ENCODE measurements at regions of chr3 and their contacts with region 1.

Region 1: DNA sequence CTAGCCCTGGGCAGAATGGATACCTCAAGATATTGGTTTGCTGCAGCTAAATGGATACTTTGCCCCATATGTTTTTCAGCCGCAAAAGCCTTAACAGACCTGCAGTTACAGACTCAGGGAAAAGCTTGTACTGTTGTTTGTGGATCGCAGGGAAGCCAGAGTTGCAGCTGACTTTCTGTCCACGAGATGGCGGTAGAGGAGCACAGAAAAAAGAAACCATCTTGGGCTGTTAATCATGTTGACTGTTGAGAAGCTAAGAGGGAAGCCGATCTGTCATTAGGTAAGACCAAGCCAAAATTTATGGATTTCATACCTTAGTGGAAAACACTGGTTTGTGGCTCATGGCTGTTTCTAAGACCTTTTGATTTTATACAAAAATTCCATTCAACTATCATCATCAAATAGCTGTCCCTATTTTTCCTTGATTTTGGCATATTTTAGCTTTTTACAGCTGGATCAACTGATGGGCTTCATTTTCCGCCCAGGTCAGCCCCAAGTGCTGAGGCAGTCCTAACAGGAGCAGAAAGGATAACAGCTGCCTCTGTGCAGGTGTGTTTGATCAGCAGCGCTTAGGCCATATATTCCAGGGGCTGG is 205.7 kb upstream of the ZPLD1 start:
- DNase-seq: peak; percentile 94
- ATAC-seq: peak; percentile 31
- H3K4me3 ChIP-seq: no peak overlapping the region
- H3K27ac ChIP-seq: no peak overlapping the region
- H3K4me1 ChIP-seq: peaks cover 39% of the 10 kb centered on the region
- H3K27me3 ChIP-seq: no peaks in the 10 kb centered on the region
- CTCF ChIP-seq: peak; percentile 96

Region 2: DNA sequence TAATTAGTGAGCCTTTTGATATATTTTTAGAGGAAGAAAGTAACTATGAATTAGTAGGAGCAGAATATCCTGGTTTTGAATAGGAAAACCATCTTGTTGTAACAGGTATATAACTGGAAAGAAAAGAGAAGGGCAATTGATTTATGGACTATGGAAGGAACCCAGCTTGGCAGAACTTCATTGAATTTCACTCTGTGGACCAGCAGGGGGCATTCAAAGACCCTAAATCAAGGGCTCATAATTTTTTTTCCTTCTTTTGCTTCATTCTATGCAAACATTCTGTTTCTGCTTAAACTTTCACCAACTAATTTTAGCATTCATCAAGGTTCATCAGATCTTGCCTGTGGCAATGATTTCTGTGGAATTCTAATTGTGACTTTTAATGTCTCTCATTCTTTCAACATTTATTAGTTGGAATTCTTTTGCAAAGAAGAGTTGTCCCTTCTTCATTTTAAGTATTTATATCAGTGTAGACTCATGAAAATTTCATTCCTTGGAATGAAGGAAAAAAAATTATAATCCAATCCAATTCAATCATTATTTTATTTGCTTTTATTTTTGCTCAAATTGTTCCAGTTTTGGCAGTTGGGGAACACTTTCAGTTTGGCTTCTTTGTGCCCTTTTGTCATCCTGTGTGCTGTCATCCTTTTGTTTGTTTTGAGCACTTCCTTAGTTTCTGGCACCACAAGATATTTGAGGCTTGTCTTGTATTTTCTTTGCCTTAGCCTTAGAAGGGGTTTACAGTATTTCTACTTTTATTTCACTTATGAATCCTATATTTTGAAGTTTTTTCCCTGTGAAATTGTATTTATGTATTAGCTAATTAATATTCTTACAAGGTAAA is 419.8 kb before region 1 on chr3:
- CTCF ChIA-PET with region 1: interaction called, 17 read pairs
- POLR2A ChIA-PET with region 1: interaction called, 5 read pairs
- intact Hi-C with region 1: loop called (anchors 1 kb)
- DNase-seq: peak; percentile 74
- ATAC-seq: peak; percentile 78
- H3K4me3 ChIP-seq: no peak overlapping the region
- H3K27ac ChIP-seq: peak overlapping the region; percentile 58
- H3K4me1 ChIP-seq: peaks cover 19% of the 10 kb centered on the region
- H3K27me3 ChIP-seq: no peaks in the 10 kb centered on the region
- CTCF ChIP-seq: peak; percentile 93

Region 3: DNA sequence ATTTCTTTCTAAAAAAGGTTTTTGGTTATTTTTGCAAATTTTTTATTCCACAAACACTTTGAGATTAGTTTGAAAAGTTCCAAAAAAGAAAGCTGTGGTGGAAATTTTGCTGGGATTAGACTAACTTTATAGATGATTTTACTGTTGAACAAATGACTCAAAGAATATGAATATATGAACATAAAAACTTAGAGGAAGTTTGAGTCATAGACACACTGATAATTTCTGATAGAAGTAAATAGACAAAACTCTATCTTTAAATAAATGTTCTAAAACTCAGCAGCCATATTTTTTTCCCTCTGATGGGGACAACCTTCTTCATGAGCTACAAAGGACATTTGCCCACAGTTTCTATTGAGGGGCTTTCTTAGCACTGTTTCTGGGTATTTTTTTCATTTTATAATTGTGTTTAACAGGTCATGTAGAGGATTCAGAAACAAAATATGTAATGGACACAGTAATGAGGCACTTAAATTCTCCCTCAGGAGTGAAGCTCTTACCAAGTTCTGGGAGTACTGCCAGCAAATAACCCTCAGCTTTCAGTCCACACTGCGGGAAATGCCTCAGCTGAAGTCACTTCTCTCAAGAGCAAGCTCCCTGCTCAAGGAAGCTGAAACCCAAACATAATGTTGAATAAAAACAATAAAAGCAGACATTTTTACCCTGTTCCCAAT is 222.2 kb before region 1 on chr3:
- CTCF ChIA-PET with region 1: interaction called, 3 read pairs
- POLR2A ChIA-PET with region 1: no interaction called
- intact Hi-C with region 1: loop called (anchors 2 kb)
- DNase-seq: peak; percentile 95
- ATAC-seq: peak; percentile 96
- H3K4me3 ChIP-seq: peak overlapping the region; percentile 20; the same call in 1 of the 2 replicates
- H3K27ac ChIP-seq: peak overlapping the region; percentile 92
- H3K4me1 ChIP-seq: peaks cover 26% of the 10 kb centered on the region
- H3K27me3 ChIP-seq: no peaks in the 10 kb centered on the region
- CTCF ChIP-seq: no peak

Region 4: GRCh38 chr3:102136183-102136582 is 93.0 kb before region 1 on chr3:
- CTCF ChIA-PET with region 1: interaction called, 5 read pairs
- POLR2A ChIA-PET with region 1: interaction called, 3 read pairs
- intact Hi-C with region 1: loop called (anchors 2 kb)
- DNase-seq: peak; percentile 84
- ATAC-seq: peak; percentile 94
- H3K4me3 ChIP-seq: peak overlapping the region; percentile 39; the same call in 1 of the 2 replicates
- H3K27ac ChIP-seq: peak overlapping the region; percentile 94
- H3K4me1 ChIP-seq: peaks cover 18% of the 10 kb centered on the region
- H3K27me3 ChIP-seq: no peaks in the 10 kb centered on the region
- CTCF ChIP-seq: no peak

Region 5: GRCh38 chr3:102195198-102195948 is 33.8 kb before region 1 on chr3:
- CTCF ChIA-PET with region 1: no interaction called
- POLR2A ChIA-PET with region 1: no interaction called
- intact Hi-C with region 1: no loop called
- DNase-seq: peak; percentile 74
- ATAC-seq: peak; percentile 32
- H3K4me3 ChIP-seq: no peak overlapping the region
- H3K27ac ChIP-seq: peak overlapping the region; percentile 79
- H3K4me1 ChIP-seq: peaks cover 51% of the 10 kb centered on the region
- H3K27me3 ChIP-seq: no peaks in the 10 kb centered on the region
- CTCF ChIP-seq: no peak

Region 6: GRCh38 chr3:102466001-102466400 is 236.8 kb after region 1 on chr3:
- CTCF ChIA-PET with region 1: interaction called, 5 read pairs
- POLR2A ChIA-PET with region 1: no interaction called
- intact Hi-C with region 1: loop called (anchors 1 kb)
- DNase-seq: peak; percentile 51
- ATAC-seq: peak; percentile 90
- H3K4me3 ChIP-seq: no peak overlapping the region
- H3K27ac ChIP-seq: no peak overlapping the region
- H3K4me1 ChIP-seq: peaks cover 6% of the 10 kb centered on the region
- H3K27me3 ChIP-seq: no peaks in the 10 kb centered on the region
- CTCF ChIP-seq: peak; percentile 66

Region 7: GRCh38 chr3:102673271-102674115 is 444.3 kb after region 1 on chr3:
- CTCF ChIA-PET with region 1: interaction called, 4 read pairs
- POLR2A ChIA-PET with region 1: no interaction called
- intact Hi-C with region 1: loop called (anchors 2 kb)
- DNase-seq: peak; percentile 71
- ATAC-seq: peak; percentile 86
- H3K4me3 ChIP-seq: 0 out of 2 replicates have a peak overlapping the region, but pooled peaks have one; percentile 17
- H3K27ac ChIP-seq: no peak overlapping the region
- H3K4me1 ChIP-seq: no peaks in the 10 kb centered on the region
- H3K27me3 ChIP-seq: peaks cover 25% of the 10 kb centered on the region; the same call in 1 of the 2 replicates
- CTCF ChIP-seq: peak; percentile 96

Measured in PC-3 (cell line).